WTC11 (cell line): ENCODE measurements at regions of chr1 and their contacts with region 1.

Region 1: DNA sequence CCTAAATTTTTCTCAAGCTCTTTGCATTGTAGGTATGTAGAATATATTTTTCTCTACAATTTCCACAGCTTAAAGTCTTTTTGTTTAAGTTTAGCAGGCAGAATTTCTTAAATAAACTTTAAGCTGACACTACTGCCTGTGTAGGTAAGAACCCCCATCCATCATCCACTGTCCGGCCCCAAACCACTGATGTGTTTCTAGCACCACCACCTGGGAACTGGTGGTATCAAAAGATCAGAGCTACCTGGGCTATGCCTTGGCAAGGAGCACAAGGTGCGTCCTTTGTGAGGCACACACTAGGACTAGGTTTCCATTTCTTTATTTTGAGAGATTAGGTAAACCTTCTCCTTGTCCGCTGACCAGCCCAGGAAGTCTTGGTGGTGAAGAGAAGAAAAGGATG is 10.5 kb upstream of the LELP1 start:
- DNase-seq: peak; percentile 73
- ATAC-seq: peak; percentile 98
- H3K4me3 Mint-ChIP-seq: no peak overlapping the region
- H3K27ac Mint-ChIP-seq: no peak overlapping the region
- H3K4me1 Mint-ChIP-seq: peaks cover 7% of the 10 kb centered on the region
- H3K27me3 Mint-ChIP-seq: peaks cover 6% of the 10 kb centered on the region
- CTCF ChIP-seq: no peak

Region 2: GRCh38 chr1:152869808-152870419 is 322.8 kb before region 1 on chr1:
- CTCF ChIA-PET with region 1: interaction called, 82 read pairs
- POLR2A ChIA-PET with region 1: no interaction called
- DNase-seq: peak; percentile 26
- ATAC-seq: peak; percentile 74
- H3K4me3 Mint-ChIP-seq: no peak overlapping the region
- H3K27ac Mint-ChIP-seq: no peak overlapping the region
- H3K4me1 Mint-ChIP-seq: no peaks in the 10 kb centered on the region
- H3K27me3 Mint-ChIP-seq: no peaks in the 10 kb centered on the region; the same call in 1 of the 2 replicates
- CTCF ChIP-seq: no peak

Region 3: GRCh38 chr1:152917794-152918193 is 274.9 kb before region 1 on chr1:
- CTCF ChIA-PET with region 1: interaction called, 43 read pairs
- POLR2A ChIA-PET with region 1: no interaction called
- DNase-seq: no peak
- ATAC-seq: peak; percentile 43
- H3K4me3 Mint-ChIP-seq: no peak overlapping the region
- H3K27ac Mint-ChIP-seq: no peak overlapping the region
- H3K4me1 Mint-ChIP-seq: peaks cover 5% of the 10 kb centered on the region
- H3K27me3 Mint-ChIP-seq: peaks cover 6% of the 10 kb centered on the region
- CTCF ChIP-seq: no peak

Region 4: GRCh38 chr1:152954434-152954833 is 238.3 kb before region 1 on chr1:
- CTCF ChIA-PET with region 1: interaction called, 123 read pairs
- POLR2A ChIA-PET with region 1: interaction called, 3 read pairs
- DNase-seq: no peak
- ATAC-seq: no peak
- H3K4me3 Mint-ChIP-seq: no peak overlapping the region
- H3K27ac Mint-ChIP-seq: no peak overlapping the region
- H3K4me1 Mint-ChIP-seq: no peaks in the 10 kb centered on the region
- H3K27me3 Mint-ChIP-seq: peaks cover 4% of the 10 kb centered on the region
- CTCF ChIP-seq: no peak

Region 5: DNA sequence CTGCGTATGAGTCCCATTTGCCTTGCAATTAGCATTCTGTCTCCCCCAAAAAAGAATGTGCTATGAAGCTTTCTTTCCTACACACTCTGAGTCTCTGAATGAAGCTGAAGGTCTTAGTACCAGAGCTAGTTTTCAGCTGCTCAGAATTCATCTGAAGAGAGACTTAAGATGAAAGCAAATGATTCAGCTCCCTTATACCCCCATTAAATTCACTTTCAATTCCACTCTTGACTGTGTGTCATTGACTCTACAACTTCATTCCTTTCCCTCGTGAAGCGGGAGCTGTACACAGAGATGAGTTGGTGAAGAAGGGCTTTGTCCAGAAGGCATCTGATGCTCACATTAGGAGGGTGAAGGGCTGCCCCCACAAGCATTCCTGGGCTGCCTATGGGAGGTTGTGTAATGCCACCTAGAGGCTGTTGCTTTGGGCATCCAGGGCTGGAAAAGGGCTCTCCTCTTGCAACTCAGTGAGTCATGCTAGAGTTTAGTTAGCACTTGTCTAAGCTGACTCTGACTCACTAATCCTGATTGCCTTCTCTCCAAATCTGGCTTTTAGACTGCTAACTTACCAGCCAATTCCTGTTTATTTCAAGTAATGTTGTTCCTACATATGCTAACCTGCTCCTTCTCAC is 159.9 kb before region 1 on chr1:
- CTCF ChIA-PET with region 1: interaction called, 14 read pairs
- POLR2A ChIA-PET with region 1: no interaction called
- DNase-seq: peak; percentile 59
- ATAC-seq: peak; percentile 99
- H3K4me3 Mint-ChIP-seq: no peak overlapping the region
- H3K27ac Mint-ChIP-seq: no peak overlapping the region
- H3K4me1 Mint-ChIP-seq: peaks cover 14% of the 10 kb centered on the region
- H3K27me3 Mint-ChIP-seq: no peaks in the 10 kb centered on the region
- CTCF ChIP-seq: no peak

Region 6: DNA sequence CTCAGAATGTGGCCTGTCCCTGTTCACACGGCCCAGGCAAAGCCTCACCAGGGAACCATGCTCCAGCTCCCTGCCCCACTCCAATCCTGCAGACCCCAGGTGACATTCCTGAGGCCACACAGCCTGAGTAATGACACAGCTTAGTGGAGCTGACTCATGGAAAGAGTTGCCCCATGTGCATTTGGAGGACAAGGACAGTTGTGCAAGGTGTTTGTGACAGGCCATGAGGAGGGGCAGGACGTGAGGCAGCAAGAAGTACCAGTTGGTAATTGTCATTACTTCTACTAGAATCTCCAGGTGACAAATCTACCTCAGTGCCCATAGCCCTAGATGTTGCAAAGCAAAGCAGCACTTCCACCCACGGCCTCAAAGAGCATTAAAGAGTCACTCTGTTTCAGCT is 39.9 kb after region 1 on chr1:
- CTCF ChIA-PET with region 1: interaction called, 11 read pairs
- POLR2A ChIA-PET with region 1: no interaction called
- DNase-seq: no peak
- ATAC-seq: no peak
- H3K4me3 Mint-ChIP-seq: no peak overlapping the region
- H3K27ac Mint-ChIP-seq: no peak overlapping the region
- H3K4me1 Mint-ChIP-seq: no peaks in the 10 kb centered on the region
- H3K27me3 Mint-ChIP-seq: peaks cover 3% of the 10 kb centered on the region; the same call in 1 of the 2 replicates
- CTCF ChIP-seq: no peak

Region 7: GRCh38 chr1:153245466-153245865 is 52.8 kb after region 1 on chr1:
- CTCF ChIA-PET with region 1: no interaction called
- POLR2A ChIA-PET with region 1: no interaction called
- DNase-seq: no peak
- ATAC-seq: no peak
- H3K4me3 Mint-ChIP-seq: no peak overlapping the region
- H3K27ac Mint-ChIP-seq: no peak overlapping the region
- H3K4me1 Mint-ChIP-seq: no peaks in the 10 kb centered on the region
- H3K27me3 Mint-ChIP-seq: peaks cover 12% of the 10 kb centered on the region
- CTCF ChIP-seq: no peak

Region 8: DNA sequence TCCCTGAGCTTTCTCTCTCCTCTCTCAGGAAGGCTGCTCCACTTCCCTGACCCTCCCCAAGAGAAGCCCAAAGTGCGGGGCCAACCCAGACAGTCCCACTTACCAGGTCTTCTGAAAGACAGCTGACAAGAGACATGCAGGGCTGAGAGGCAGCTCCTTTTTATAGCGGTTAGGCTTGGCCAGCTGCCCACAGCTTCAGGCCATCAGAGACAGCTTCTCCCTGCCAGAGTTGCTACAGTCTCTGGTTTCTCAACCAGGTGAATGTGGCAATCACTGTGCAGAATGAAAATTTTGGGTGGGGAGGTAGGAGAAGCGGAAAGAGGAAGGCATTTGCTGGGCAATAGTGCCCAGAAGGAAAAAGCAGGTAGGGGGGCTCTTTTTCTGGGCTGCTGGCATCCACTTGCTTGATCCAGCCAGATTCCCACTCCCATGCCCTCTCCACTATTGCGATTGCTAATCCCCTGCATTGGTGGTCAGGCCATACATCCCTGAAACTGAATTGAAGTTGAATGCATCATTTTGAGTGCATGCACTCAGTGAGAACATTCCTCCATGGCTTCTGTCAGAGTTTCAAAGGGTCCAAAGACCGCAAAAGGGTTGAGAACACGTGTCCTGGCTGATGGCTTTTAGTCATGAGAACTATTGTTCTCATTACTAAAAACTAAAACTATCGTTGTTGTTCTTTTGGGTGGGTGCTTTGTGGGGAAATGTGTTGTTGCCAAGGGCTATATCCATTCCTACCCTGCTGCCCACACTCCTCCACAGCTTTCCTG is 198.4 kb after region 1 on chr1 and contains the start of gene S100A8:
- CTCF ChIA-PET with region 1: no interaction called
- POLR2A ChIA-PET with region 1: no interaction called
- DNase-seq: no peak
- ATAC-seq: no peak
- H3K4me3 Mint-ChIP-seq: no peak within 1 kb of the TSS
- H3K27ac Mint-ChIP-seq: no peak within 1 kb of the TSS
- H3K4me1 Mint-ChIP-seq: no peaks in the 10 kb centered on the region
- H3K27me3 Mint-ChIP-seq: peaks cover 4% of the 10 kb centered on the region
- CTCF ChIP-seq: no peak
- total RNA-seq, gene S100A8: 1.4 TPM in 1 of 3 replicates, not detected in the others